Body of pancreas (tissue), 4 donors: ENCODE measurements at regions of chr4 and their contacts with region 1.

Region 1: DNA sequence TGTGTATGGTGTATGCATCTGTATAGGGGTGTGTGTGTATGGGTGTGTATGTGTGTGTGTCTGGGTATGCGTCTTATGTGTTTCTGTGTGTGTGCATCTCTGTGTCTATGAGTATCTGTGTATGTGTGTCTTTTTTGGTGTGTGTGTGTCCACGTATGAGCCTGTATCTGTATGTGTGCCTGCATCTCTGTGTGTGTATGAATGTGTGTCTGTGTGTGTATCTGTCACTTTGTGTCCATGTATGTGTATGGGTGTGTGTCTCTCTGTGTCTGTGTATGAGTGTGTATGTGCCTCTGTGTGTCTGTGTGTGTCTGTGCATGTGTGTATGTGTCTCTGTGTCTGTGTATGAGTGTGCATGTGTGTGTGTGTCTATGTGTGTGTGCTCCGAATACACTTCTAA is 24.3 kb downstream of the FAM149A start:
- DNase-seq: no peak
- ATAC-seq: no peak
- H3K4me3 ChIP-seq: no peak overlapping the region
- H3K27ac ChIP-seq: no peak overlapping the region
- H3K4me1 ChIP-seq: peaks cover 15% of the 10 kb centered on the region
- H3K27me3 ChIP-seq: no peaks in the 10 kb centered on the region
- CTCF ChIP-seq: no peak
- POLR2A ChIP-seq: no peak

Region 2: DNA sequence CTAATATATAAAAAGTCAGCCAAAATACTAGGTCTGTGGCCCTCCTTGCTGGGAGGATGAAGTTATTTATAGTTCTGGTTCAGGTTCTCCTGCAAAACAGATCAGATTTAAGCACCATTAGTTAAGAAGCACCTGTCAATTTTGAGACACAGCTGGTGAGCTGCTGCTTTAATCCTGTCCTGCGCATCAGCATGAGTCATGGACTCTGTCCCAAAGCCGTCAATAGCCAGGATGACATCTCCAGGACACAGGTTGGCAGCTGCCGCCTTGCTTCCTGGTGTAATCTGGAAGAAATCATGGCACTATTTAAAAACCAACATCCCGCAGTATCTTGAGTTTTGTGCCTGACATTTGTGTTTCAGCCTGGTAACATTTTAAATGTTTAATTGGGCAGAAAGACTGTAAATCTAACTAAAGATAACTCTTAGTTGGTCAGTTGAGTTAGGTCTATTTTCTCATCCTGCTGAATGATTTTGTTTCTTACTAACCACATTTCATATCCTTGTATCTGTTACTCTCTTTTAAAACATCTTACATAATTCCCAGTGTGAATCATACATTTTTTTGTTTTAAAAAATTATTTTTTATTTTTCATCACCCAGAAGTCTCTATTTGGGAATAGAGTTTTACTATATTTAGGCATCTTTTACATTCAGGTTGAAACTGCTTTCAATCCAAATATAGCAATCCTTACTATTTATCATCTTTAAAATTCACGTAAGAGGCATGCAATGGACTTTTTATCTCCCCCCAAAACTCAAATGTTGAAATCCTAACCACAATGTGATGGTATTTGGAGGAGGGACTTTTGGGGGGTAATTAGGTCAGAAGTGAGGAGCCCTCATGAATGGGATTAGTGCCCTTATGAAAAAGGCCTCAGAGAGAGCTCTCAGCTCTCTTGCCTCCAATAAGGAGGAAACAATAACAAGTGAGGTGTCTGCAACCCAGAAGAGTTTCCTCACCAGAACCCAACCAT is 603.7 kb before region 1 on chr4:
- intact Hi-C with region 1: no loop called
- DNase-seq: no peak
- ATAC-seq: no peak
- H3K4me3 ChIP-seq: no peak overlapping the region
- H3K27ac ChIP-seq: no peak overlapping the region
- H3K4me1 ChIP-seq: no peaks in the 10 kb centered on the region
- H3K27me3 ChIP-seq: no peaks in the 10 kb centered on the region
- CTCF ChIP-seq: no peak
- POLR2A ChIP-seq: no peak

Region 3: GRCh38 chr4:186067757-186068385 is 61.0 kb before region 1 on chr4:
- intact Hi-C with region 1: loop called (anchors 5 kb)
- DNase-seq: peak; percentile 79 to 91 (median 88)
- ATAC-seq: peak; percentile 96
- H3K4me3 ChIP-seq: no peak overlapping the region
- H3K27ac ChIP-seq: peak overlapping the region; percentile 47 to 81 (median 74)
- H3K4me1 ChIP-seq: peaks cover 16% of the 10 kb centered on the region
- H3K27me3 ChIP-seq: no peaks in the 10 kb centered on the region
- CTCF ChIP-seq: peak; percentile 45 to 86 (median 73)
- POLR2A ChIP-seq: peak in 2 of 3 donors; percentile 19 to 42

Region 4: GRCh38 chr4:186351668-186352194 is 222.9 kb after region 1 on chr4:
- intact Hi-C with region 1: no loop called
- DNase-seq: peak; percentile 68 to 83 (median 81)
- ATAC-seq: peak; percentile 80
- H3K4me3 ChIP-seq: no peak overlapping the region
- H3K27ac ChIP-seq: peak overlapping the region; percentile 57 to 72 (median 72)
- H3K4me1 ChIP-seq: peaks cover 33% of the 10 kb centered on the region
- H3K27me3 ChIP-seq: no peaks in the 10 kb centered on the region
- CTCF ChIP-seq: no peak
- POLR2A ChIP-seq: peak in 1 of 3 donors; percentile 23